Right cardiac atrium (tissue), 5 donors: ENCODE measurements at regions of chr10 and their contacts with region 1.

Region 1: DNA sequence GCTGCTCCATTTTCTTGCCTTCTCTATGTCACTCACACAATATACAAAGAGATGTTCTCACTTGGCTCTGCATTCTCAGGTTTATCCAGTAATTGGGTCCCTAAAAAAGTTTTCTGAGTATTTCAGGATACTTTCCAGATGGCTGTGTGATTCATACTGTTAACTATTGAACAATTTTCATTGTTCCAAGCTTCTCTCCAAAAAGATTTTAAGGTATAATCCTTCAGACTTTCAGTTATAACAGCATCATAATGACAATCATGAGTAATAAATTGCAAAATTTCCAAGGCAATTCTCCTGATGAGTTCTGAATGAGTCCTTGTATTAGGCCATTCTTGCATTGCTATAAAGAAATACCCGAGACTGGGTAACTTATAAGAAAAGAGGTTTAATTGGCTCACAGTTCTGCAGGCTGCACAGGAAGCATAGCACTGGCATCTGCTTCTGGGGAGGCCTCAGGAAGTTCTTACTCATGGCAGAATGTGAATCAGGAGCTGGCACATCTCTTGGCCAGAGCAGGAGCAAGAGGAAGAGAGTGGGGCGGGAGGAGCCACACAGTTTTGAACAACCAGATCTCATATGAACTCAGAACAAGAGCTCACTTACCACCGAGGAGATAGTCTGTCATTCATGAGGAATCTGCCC is 148.1 kb downstream of the SLC16A9 start:
- DNase-seq: no peak
- ATAC-seq: no peak
- H3K4me3 ChIP-seq: no peak overlapping the region
- H3K27ac ChIP-seq: no peak overlapping the region
- H3K4me1 ChIP-seq: peaks cover 2% of the 10 kb centered on the region
- H3K27me3 ChIP-seq: no peaks in the 10 kb centered on the region

Region 2: GRCh38 chr10:59265141-59265540 is 296.5 kb before region 1 on chr10:
- intact Hi-C with region 1: loop called in 1 of 4 experiments (anchors 5 kb)
- DNase-seq: no peak
- ATAC-seq: no peak
- H3K4me3 ChIP-seq: no peak overlapping the region
- H3K27ac ChIP-seq: no peak overlapping the region
- H3K4me1 ChIP-seq: no peaks in the 10 kb centered on the region
- H3K27me3 ChIP-seq: no peaks in the 10 kb centered on the region

Region 3: GRCh38 chr10:59434463-59435321 is 126.9 kb before region 1 on chr10:
- intact Hi-C with region 1: no loop called
- DNase-seq: no peak
- ATAC-seq: no peak
- H3K4me3 ChIP-seq: no peak overlapping the region
- H3K27ac ChIP-seq: no peak overlapping the region
- H3K4me1 ChIP-seq: no peaks in the 10 kb centered on the region
- H3K27me3 ChIP-seq: no peaks in the 10 kb centered on the region

Region 4: DNA sequence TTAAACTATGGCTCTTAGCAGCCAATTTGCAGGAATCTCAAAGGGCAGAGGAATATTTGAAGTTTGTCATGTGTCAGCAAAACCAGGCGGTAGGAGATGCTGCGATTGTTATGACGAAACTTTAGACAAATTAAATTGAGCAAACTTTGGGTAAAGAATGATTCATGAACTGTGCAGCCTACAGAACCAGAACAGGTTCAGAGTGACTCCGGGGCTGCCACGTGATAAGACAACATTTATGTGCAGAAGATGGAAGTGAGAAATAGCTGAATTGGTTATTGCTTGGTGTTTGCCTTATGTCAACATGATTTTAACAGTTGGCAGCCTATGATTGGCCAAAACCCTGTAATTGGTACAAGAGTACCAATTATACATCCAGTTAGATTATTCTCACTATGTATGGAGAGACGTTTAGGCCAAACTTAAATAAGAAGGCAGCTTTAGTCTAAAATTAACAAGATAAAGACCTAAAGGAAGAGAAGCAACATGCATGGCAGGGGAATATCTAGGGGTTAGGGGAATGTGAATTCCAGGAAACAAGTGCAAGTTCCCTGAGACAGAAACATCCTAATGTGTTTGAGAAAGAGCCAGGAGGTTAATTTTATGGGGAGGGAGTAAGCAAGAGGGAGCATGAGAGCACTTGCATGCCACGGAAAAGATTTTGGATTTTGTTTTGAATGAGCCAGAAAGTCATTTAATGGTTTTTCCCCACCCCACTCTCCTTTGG is 384.2 kb after region 1 on chr10:
- intact Hi-C with region 1: no loop called
- DNase-seq: no peak
- ATAC-seq: no peak
- H3K4me3 ChIP-seq: no peak overlapping the region
- H3K27ac ChIP-seq: no peak overlapping the region
- H3K4me1 ChIP-seq: no peaks in the 10 kb centered on the region
- H3K27me3 ChIP-seq: no peaks in the 10 kb centered on the region